Spleen (tissue), 13 donors: ENCODE measurements at regions of chr4 and their contacts with region 1.

Region 1: DNA sequence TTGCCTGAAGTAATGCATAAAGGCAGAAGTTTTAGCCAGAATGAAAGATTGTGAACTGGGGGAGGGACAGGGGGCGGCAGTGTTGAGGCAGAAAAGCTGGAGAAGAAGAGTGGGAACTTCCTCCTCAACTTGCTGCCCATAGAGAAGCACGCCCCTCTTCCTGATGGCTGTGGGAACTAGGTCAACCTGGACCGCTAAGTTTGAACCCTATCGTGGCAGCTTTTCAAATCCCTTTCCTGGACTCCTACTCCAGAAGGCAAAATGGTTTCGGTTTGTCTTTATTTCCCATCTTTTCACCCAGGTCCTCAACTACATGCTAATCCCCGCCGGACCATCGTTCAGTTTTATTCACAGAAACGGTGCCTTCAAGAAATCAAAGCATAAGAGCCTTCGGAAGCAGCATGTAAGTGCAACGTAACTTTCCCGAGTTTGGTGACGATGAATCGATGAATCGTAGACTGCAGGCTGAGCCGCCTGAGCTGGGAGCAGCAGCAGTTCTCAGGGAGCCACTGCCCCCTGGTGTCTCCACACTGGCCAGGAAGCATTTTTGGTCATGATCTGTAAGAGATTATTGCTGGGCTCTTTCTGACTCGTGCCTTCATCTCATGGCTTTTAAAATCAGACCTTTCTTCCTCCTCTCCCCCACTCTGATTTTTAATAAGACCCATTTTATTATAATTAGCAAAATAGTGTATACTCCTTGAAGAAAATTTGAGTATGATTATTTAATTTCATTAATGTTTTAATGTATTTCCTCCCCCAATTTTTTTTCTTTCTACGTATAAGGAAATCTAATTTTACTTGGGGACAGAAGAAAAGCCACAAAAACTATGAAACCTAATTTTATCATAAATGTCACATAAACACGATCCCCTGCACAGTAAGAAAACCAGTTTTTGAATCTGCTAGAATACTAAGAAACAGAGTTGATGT is 21.4 kb downstream of the SPINK2 start:
- DNase-seq: peak; percentile 93
- H3K4me3 ChIP-seq: peak overlapping the region; percentile 41 to 74 (median 54)
- H3K27ac ChIP-seq: peak overlapping the region; percentile 10 to 87 (median 82)
- H3K4me1 ChIP-seq: peaks cover 0 to 26% (median 11%) of the 10 kb centered on the region in 6 donors
- H3K27me3 ChIP-seq: no peaks in the 10 kb centered on the region
- CTCF ChIP-seq: peak; percentile 69 to 89 (median 82)
- POLR2A ChIP-seq: peak in 1 of 3 donors; percentile 15

Region 2: GRCh38 chr4:56544573-56545131 is 255.4 kb before region 1 on chr4:
- intact Hi-C with region 1: loop called (anchors 10 kb)
- DNase-seq: peak; percentile 97
- H3K4me3 ChIP-seq: peak overlapping the region in 6 of 8 donors; percentile 12 to 66 (median 32)
- H3K27ac ChIP-seq: no peak overlapping the region
- H3K4me1 ChIP-seq: peaks cover 0 to 14% (median 10%) of the 10 kb centered on the region in 6 donors
- H3K27me3 ChIP-seq: peaks cover 0 to 5% (median 0%) of the 10 kb centered on the region in 7 donors
- CTCF ChIP-seq: peak; percentile 85 to 99 (median 96)
- POLR2A ChIP-seq: no peak

Region 3: GRCh38 chr4:56575820-56576429 is 224.2 kb before region 1 on chr4:
- intact Hi-C with region 1: loop called (anchors 10 kb)
- DNase-seq: no peak
- H3K4me3 ChIP-seq: no peak overlapping the region
- H3K27ac ChIP-seq: no peak overlapping the region
- H3K4me1 ChIP-seq: no peaks in the 10 kb centered on the region
- H3K27me3 ChIP-seq: peaks cover 0 to 6% (median 0%) of the 10 kb centered on the region in 7 donors
- CTCF ChIP-seq: peak; percentile 13 to 49 (median 33)
- POLR2A ChIP-seq: no peak

Region 4: DNA sequence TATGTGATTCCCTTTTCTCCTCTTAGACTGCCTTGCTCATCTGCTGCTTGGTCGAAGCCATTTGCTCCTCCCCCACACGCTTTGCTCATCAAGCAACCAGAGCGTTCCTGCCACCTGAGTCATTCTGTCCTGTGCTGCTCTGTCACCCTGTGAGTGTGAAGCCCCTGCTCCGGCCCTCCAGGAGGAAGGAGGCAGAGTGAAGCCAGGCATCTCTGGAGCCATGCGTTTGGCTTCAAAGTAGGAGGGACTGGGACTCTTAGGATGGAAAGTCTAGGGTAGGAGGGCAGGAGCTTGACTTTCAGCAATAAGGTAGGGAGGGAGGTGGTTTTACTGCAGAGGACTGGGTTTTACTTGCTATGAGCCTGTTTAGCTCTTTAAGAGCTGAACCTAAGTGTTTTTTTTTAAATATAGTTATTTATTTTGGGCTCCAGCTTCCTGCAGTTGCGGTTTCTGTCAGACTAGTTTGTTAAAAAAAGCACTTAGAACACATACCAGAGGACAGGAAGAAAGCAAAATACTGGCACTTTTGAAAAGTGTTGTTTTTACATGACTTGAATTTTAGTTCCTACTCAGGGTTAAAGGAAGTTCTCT is 42.2 kb before region 1 on chr4:
- intact Hi-C with region 1: no loop called
- DNase-seq: peak; percentile 86
- H3K4me3 ChIP-seq: peak overlapping the region in 5 of 8 donors; percentile 4 to 53 (median 14)
- H3K27ac ChIP-seq: peak overlapping the region; percentile 77 to 91 (median 82)
- H3K4me1 ChIP-seq: peaks cover 7 to 42% (median 27%) of the 10 kb centered on the region in 6 donors
- H3K27me3 ChIP-seq: no peaks in the 10 kb centered on the region
- CTCF ChIP-seq: no peak
- POLR2A ChIP-seq: no peak